Aorta (tissue), 5 donors: ENCODE measurements at regions of chr7 and their contacts with region 1.

Region 1: GRCh38 chr7:98753989-98754479 is 115.8 kb downstream of the TMEM130 start:
- DNase-seq: peak in 1 of 2 donors; percentile 29
- ATAC-seq: no peak
- H3K4me3 ChIP-seq: no peak overlapping the region
- H3K27ac ChIP-seq: peak overlapping the region in 1 of 2 donors; percentile 19
- H3K4me1 ChIP-seq: no peaks in the 10 kb centered on the region
- H3K27me3 ChIP-seq: no peaks in the 10 kb centered on the region

Region 2: GRCh38 chr7:98434095-98434494 is 319.9 kb before region 1 on chr7:
- intact Hi-C with region 1: loop called (anchors 5 to 10 kb)
- DNase-seq: no peak
- ATAC-seq: no peak
- H3K4me3 ChIP-seq: no peak overlapping the region
- H3K27ac ChIP-seq: no peak overlapping the region
- H3K4me1 ChIP-seq: no peaks in the 10 kb centered on the region
- H3K27me3 ChIP-seq: no peaks in the 10 kb centered on the region

Region 3: GRCh38 chr7:98703916-98704315 is 50.1 kb before region 1 on chr7:
- intact Hi-C with region 1: no loop called
- DNase-seq: peak in 1 of 2 donors; percentile 41
- ATAC-seq: no peak
- H3K4me3 ChIP-seq: no peak overlapping the region
- H3K27ac ChIP-seq: no peak overlapping the region
- H3K4me1 ChIP-seq: no peaks in the 10 kb centered on the region
- H3K27me3 ChIP-seq: peaks cover 0 to 3% of the 10 kb centered on the region in 2 donors

Region 4: DNA sequence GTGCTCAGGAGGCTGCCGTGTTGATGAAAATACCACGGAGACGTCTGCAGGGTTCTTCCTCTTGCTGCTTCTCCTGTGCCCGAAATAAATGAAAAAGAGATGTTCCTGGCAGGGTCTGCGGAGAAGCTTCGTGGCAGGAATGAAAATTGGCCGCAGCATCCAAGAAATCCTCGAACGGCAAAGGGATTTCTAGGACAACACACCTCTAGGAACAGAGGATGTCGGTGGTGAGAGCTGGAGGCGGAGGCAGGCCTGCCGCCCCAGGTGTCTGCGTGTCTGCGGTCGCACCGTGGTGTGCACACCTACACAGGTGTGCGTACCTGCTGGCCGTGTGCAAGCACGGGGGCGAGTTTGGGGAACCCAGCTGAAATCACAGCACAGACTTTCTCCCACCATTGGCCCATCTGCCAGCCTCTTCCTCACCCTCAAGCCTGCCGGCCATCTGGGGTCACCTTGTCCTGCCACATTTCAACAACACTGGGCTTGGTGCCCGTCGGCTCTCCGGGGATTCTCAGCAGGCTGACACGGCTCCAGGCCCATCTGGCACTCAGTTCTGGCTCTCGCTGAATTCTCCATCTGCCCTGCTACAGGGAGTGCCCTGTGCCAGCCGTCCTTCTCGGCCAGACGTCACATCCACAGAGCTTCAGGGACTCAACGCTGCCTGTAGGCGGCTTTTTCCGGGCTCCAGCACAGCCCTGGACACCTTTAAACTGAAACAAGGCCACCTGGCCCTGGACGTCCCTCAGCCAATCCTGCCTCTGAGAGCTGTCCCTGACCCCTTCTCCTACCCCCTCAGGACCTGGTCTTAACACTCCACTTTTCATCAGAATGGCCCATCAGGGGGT is 72.6 kb after region 1 on chr7:
- intact Hi-C with region 1: loop called in 1 of 2 experiments (anchors 5 kb)
- DNase-seq: peak; percentile 91 to 95
- ATAC-seq: peak; percentile 91
- H3K4me3 ChIP-seq: no peak overlapping the region
- H3K27ac ChIP-seq: peak overlapping the region; percentile 23 to 34
- H3K4me1 ChIP-seq: no peaks in the 10 kb centered on the region
- H3K27me3 ChIP-seq: no peaks in the 10 kb centered on the region